Gastrocnemius medialis (tissue), 4 donors: ENCODE measurements at regions of chr9 and their contacts with region 1.

Region 1: DNA sequence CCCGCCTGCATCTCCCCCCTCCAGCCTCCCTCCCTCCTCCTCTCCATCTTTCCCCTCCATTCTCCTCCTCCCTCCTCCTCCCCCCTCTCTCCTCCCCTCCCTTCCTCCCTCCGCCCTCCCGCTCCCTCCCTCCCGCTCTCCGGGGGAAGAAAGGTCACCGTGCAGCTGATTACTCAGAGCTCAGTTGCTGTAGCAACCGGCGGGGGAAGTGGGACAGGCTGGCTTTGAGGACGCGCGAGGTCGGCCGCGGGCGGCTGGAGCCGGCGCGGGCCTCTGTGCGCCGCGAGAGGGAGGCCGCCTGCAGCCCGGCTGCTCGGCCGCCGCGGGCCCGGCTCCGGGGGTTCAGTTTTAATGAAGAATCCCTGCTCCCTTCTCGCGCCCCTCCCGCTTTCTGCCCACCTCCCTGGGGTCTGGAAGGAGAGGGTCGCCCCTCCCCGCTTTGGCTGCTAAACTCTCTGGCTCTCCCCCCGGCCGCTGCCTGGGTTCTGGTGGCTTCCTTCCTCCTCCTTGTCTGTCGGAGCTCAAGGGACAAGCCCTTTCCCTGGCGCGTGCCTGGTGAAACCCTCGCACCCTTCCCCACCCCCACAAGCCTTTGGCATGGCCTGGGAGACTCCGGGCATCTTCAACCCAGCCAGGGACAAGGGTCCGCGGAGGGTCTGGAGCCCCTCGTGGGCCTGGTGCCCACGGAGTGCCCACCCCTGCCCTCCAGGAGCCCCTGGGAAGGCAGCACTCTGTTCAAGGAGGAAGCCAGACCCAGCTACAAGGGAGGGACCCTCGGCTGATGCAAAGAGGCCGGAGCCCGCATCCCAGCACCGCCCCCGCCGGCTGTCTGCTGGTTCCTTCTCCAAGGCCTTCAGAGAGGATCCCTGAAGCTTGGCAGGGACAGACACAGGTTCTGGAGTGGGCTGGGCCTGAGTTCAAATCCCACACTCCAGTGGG is 160.3 kb downstream of the C9orf50 start:
- DNase-seq: peak; percentile 92 to 94
- ATAC-seq: peak; percentile 93 to 94
- H3K4me3 ChIP-seq: peak overlapping the region; percentile 50 to 67 (median 54)
- H3K27ac ChIP-seq: peak overlapping the region; percentile 84 to 91 (median 85)
- H3K4me1 ChIP-seq: peaks cover 23 to 27% of the 10 kb centered on the region in 2 donors
- H3K27me3 ChIP-seq: no peaks in the 10 kb centered on the region
- CTCF ChIP-seq: peak in 2 of 5 experiments; percentile 34 to 59
- POLR2A ChIP-seq: peak; percentile 64 to 79

Region 2: DNA sequence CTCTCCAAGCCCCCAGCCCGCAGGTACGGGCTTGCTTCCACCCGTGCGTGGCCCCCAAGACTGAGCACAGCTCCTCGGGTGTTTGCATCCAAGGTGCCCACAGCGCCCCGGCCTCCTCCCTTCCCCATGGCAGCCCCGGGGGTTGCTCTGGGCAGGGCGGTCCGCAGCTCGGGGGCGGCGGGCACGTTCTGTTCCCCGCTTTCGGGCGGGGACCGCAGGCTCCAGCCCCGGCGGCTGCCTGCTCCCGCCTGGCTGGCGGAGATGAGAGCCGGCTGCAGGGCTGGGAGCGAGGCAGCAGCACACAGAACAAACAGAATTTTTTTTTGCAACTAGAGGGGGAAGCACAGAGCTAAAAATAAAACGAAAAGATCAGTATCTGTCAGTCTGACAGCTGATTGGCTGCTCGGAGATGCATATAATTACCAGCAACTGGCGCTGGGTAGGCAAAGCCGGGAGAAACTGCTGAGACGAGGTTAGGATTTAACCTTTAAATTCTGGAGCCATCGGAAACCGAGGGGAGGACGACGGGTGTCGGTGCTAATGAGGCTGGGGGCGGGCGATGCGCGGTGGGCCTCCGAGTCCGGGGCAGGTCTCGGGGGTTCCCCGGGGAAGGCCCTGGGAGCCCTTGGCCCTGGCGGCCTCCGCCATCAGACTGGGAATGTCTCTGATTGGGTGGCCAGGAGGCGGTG is 139.9 kb before region 1 on chr9:
- in situ Hi-C with region 1: no loop called
- intact Hi-C with region 1: loop called (anchors 5 kb)
- DNase-seq: peak in 1 of 2 donors; percentile 47
- ATAC-seq: peak; percentile 77 to 88
- H3K4me3 ChIP-seq: peak overlapping the region; percentile 39 to 62 (median 48)
- H3K27ac ChIP-seq: peak overlapping the region; percentile 60 to 84 (median 75)
- H3K4me1 ChIP-seq: peaks cover 41 to 45% of the 10 kb centered on the region in 2 donors
- H3K27me3 ChIP-seq: no peaks in the 10 kb centered on the region
- CTCF ChIP-seq: no peak
- POLR2A ChIP-seq: peak; percentile 41 to 62

Region 3: DNA sequence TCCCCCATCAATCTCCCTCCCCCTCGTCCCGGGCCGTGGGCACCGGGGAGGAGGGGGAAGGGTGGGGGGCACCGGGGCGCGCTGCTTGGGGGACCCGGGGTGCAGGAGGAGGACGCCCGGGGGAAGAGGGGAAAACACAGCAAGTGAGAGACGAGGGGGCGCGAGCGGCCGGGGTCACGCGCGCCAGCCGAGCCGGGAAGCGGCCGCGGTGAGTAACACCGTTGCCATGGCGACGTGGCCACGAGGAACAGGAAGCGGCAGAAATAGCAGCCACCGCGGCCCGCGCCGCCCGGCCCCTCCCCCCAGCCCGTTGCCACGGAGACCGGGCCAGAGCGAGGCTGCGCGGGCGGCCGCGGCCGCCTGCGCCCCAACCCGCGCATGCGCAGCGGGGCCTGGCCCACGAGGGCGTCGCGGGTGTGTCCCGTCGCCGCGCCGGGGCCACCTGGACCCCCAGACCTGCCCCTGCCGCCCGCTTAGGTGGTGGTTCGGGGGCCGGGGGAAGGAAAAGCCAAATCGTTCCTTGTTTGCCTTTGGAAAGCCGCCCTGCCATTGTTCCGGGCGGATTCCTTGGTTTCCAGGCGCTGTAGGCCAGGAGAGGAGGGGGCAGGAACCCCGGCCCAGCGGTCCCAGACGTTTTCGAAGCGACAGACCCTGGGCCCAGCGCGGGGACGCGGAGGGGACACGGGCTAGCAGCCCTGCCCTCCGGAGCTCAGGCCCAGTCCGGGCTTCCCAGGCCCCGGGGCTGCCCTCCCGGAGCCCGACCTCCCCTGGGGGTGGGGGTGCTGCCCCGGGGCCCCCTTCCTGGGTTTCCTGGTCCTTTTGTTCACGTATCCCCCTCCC is 46.8 kb before region 1 on chr9:
- in situ Hi-C with region 1: no loop called
- intact Hi-C with region 1: loop called (anchors 2 kb)
- DNase-seq: peak; percentile 98 to 99
- ATAC-seq: peak; percentile 83 to 88
- H3K4me3 ChIP-seq: peak overlapping the region; percentile 60 to 85 (median 75)
- H3K27ac ChIP-seq: peak overlapping the region; percentile 85 to 100 (median 98)
- H3K4me1 ChIP-seq: peaks cover 10 to 23% of the 10 kb centered on the region in 2 donors
- H3K27me3 ChIP-seq: no peaks in the 10 kb centered on the region
- CTCF ChIP-seq: peak in 1 of 5 experiments; percentile 22
- POLR2A ChIP-seq: peak; percentile 94 to 99

Region 4: GRCh38 chr9:129482521-129483414 is 22.2 kb after region 1 on chr9:
- in situ Hi-C with region 1: no loop called
- intact Hi-C with region 1: loop called (anchors 1 kb)
- DNase-seq: peak; percentile 67 to 87
- ATAC-seq: peak; percentile 67 to 70
- H3K4me3 ChIP-seq: peak overlapping the region; percentile 57 to 86 (median 69)
- H3K27ac ChIP-seq: peak overlapping the region; percentile 96 to 99 (median 98)
- H3K4me1 ChIP-seq: peaks cover 29 to 41% of the 10 kb centered on the region in 2 donors
- H3K27me3 ChIP-seq: no peaks in the 10 kb centered on the region
- CTCF ChIP-seq: no peak
- POLR2A ChIP-seq: peak; percentile 19 to 46

Region 5: GRCh38 chr9:129550199-129550839 is 89.7 kb after region 1 on chr9:
- in situ Hi-C with region 1: loop called in 1 of 4 experiments (anchors 25 kb)
- intact Hi-C with region 1: no loop called
- DNase-seq: peak; percentile 25 to 58
- ATAC-seq: peak; percentile 71 to 75
- H3K4me3 ChIP-seq: peak overlapping the region; percentile 43 to 63 (median 50)
- H3K27ac ChIP-seq: peak overlapping the region; percentile 51 to 71 (median 68)
- H3K4me1 ChIP-seq: peaks cover 11 to 16% of the 10 kb centered on the region in 2 donors
- H3K27me3 ChIP-seq: peaks cover 0 to 10% (median 3%) of the 10 kb centered on the region in 3 donors
- CTCF ChIP-seq: no peak
- POLR2A ChIP-seq: no peak

Region 6: DNA sequence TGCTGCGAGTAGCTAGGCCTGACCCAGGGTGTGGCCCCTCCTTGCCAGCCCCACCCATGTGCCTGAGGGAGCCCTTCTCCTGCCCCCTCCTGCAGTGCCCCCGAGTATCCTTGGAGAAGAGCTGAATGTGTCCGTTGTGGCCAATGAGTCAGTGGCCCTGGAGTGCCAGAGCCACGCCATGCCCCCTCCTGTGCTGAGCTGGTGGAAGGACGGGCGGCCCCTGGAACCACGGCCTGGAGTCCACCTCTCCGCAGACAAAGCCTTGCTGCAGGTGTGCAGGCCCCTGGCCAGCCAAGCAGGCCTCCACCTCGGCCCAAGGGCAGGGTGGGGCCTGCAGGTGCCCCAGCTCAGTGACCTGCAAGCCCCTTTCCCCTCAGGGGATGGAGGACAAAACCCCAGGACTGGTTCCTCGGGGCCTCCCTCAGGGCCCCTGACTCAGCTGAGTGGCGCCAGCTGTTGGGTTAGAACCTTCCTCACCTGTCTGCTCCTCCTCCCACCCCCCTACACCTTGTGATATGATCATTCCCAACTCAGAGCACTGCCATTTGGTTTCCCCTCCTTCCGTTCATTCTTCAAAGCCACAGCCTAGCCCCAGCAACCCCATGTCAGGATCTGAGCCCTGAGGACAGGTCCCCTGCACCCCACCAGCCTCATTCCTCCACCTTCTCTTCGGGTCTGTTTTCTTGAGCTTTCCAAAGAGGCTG is 904.2 kb after region 1 on chr9:
- in situ Hi-C with region 1: no loop called
- intact Hi-C with region 1: no loop called
- DNase-seq: no peak
- ATAC-seq: no peak
- H3K4me3 ChIP-seq: no peak overlapping the region
- H3K27ac ChIP-seq: no peak overlapping the region
- H3K4me1 ChIP-seq: no peaks in the 10 kb centered on the region
- H3K27me3 ChIP-seq: no peaks in the 10 kb centered on the region
- CTCF ChIP-seq: no peak
- POLR2A ChIP-seq: no peak